ENCODE measurements at regions of chr9 and their contacts with region 1.

Region 1: DNA sequence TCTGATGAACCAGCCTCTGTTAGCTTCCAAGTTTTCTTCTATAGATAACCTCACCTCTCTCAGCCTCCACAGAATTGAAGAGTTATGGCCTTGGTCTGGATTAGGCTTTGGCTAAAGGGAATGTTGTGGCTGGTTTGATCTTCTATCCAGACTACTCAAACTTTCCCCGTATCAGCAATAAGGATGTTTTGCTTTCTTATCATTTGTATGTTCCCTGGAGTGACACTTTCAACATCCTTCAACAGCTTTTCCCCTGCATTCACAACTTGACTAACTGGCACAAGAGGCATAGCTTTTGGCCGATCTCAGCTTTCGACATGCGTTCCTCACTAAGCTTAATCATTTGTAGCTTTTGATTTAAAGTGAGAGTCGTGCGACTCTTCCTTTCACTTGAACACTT is 28.1 kb upstream of the GNE start:
- DNase-seq: no peak
- H3K27ac ChIP-seq: no peak overlapping the region
- CTCF ChIP-seq: no peak

Region 2: GRCh38 chr9:34413231-34413852 is 1873.0 kb before region 1 on chr9:
- CTCF ChIA-PET with region 1: no interaction called
- POLR2A ChIA-PET with region 1: interaction called, 10 read pairs
- DNase-seq: peak; percentile 62
- H3K27ac ChIP-seq: no peak overlapping the region
- CTCF ChIP-seq: no peak

Region 3: GRCh38 chr9:36306471-36307306 is 20.3 kb after region 1 on chr9:
- CTCF ChIA-PET with region 1: no interaction called
- POLR2A ChIA-PET with region 1: no interaction called
- DNase-seq: peak; percentile 36
- H3K27ac ChIP-seq: peak overlapping the region; percentile 76
- CTCF ChIP-seq: no peak